CD14-positive monocyte (primary cell): ENCODE measurements at regions of chr9 and their contacts with region 1.

Region 1: DNA sequence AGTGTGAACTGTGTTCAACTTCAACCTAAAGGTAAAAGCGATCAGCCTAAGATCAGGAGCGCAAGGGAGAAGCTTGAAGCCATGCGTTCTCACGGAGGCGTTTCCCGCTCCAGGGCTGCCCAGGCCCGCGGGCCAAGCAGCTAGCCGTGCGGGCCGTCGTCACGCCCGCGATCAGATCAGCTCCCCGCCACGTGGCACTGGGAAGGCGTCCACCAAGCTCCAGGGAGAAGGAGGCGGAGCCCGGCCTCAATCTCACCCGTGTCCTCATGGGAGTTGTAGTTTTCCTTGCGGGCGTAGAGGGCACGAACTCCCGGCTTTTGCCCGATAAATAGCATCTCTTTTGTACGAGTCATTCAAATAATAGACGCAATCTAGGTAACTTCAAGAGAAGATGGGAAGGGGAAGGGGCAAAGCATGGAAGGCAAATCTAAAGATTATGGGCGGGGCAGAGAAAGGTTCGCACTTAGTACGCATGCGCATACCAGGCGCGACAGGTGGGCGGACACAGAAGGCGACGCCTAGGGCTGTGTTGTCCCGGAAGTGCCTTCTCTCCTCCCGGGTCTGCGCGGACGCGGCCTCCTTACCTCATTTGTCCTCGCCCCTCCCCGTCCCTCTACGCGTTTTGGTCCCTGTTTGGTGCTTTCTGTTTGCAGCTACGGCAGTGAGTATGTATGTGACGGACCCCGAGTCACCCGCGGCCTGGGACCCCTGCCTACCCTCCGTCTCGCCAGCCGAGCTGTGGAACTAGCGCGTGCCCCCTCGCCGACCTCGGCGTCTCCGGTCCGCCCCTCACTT is 40.8 kb upstream of the ZCCHC7 start:
- DNase-seq: peak; percentile 93 to 96 (median 94)
- H3K4me3 ChIP-seq: peak overlapping the region; percentile 77 to 97 (median 95)
- H3K4me3 Mint-ChIP-seq: peak overlapping the region; percentile 95 to 99
- H3K27ac ChIP-seq: peak overlapping the region; percentile 45 to 95
- H3K27ac Mint-ChIP-seq: peak overlapping the region; percentile 92 to 98 (median 95)
- H3K4me1 ChIP-seq: peaks cover 8 to 18% of the 10 kb centered on the region in 2 donors
- H3K4me1 Mint-ChIP-seq: peaks cover 25% of the 10 kb centered on the region
- H3K27me3 ChIP-seq: no peaks in the 10 kb centered on the region
- H3K27me3 Mint-ChIP-seq: peaks cover 3 to 19% (median 13%) of the 10 kb centered on the region in 3 donors
- CTCF ChIP-seq: no peak

Region 2: DNA sequence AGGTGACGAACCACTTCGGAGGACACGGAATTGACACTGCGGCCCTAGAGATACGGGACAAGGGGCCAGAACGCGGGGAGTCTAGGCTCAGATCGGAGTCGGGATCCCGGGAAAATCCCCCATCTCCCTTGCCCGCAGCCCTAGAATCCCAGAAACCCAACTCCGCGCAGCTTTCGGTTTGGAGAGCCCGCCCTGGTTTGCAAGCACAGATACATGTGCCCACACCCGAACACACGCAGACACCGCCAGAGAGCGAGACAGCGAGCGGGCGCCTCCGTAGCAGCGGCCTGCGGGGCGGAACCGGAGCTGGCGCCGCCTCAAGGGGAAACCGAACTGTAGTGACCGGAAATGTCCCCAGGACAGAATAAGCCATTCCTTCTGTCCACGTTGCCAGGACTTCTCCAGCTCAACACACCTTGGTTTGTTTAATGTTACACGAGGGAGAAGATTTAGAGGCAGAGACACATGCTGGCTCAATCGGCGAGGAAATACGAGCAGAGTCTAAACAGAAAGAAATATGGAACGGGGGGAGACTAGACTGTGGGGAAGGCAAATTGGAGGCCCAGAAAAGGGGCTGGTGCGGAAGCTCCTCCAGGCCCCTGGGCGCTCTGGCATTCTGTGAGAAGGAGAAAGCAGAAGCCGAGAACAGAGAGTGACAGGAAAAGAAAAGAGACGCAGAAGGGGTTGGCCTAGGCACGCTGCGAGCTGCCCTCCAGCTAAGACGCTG is 42.6 kb before region 1 on chr9:
- intact Hi-C with region 1: loop called in 1 of 2 experiments (anchors 5 kb)
- DNase-seq: peak; percentile 32 to 50 (median 34)
- H3K4me3 ChIP-seq: peak overlapping the region; percentile 37 to 80 (median 54)
- H3K4me3 Mint-ChIP-seq: peak overlapping the region; percentile 88 to 97
- H3K27ac ChIP-seq: no peak overlapping the region
- H3K27ac Mint-ChIP-seq: peak overlapping the region in 4 of 7 donors; percentile 21 to 74 (median 48)
- H3K4me1 ChIP-seq: peaks cover 40 to 47% of the 10 kb centered on the region in 2 donors
- H3K4me1 Mint-ChIP-seq: peaks cover 42% of the 10 kb centered on the region
- H3K27me3 ChIP-seq: peaks cover 80 to 100% of the 10 kb centered on the region in 2 donors
- H3K27me3 Mint-ChIP-seq: peaks cover 97 to 99% (median 98%) of the 10 kb centered on the region in 3 donors
- CTCF ChIP-seq: no peak